ENCODE measurements at regions of chr2 and their contacts with region 1.

Region 1: GRCh38 chr2:38315707-38316333 is 61.3 kb downstream of the ATL2 start:
- DNase-seq: no peak
- H3K4me3 Mint-ChIP-seq: no peak overlapping the region
- H3K27ac Mint-ChIP-seq: no peak overlapping the region
- H3K4me1 Mint-ChIP-seq: peaks cover 2% of the 10 kb centered on the region
- H3K27me3 Mint-ChIP-seq: no peaks in the 10 kb centered on the region

Region 2: GRCh38 chr2:38377050-38377828 is 61.4 kb after region 1 on chr2 and contains the start of gene ATL2:
- CTCF ChIA-PET with region 1: interaction called, 18 read pairs
- DNase-seq: peak; percentile 97
- H3K4me3 Mint-ChIP-seq: peak within 1 kb of the TSS; percentile 91
- H3K27ac Mint-ChIP-seq: peak within 1 kb of the TSS; percentile 96
- H3K4me1 Mint-ChIP-seq: peaks cover 65% of the 10 kb centered on the region
- H3K27me3 Mint-ChIP-seq: no peaks in the 10 kb centered on the region

Region 3: GRCh38 chr2:38465789-38466127 is 149.9 kb after region 1 on chr2:
- CTCF ChIA-PET with region 1: interaction called, 24 read pairs
- DNase-seq: peak; percentile 29
- H3K4me3 Mint-ChIP-seq: no peak overlapping the region
- H3K27ac Mint-ChIP-seq: no peak overlapping the region
- H3K4me1 Mint-ChIP-seq: no peaks in the 10 kb centered on the region
- H3K27me3 Mint-ChIP-seq: peaks cover 15% of the 10 kb centered on the region

Region 4: DNA sequence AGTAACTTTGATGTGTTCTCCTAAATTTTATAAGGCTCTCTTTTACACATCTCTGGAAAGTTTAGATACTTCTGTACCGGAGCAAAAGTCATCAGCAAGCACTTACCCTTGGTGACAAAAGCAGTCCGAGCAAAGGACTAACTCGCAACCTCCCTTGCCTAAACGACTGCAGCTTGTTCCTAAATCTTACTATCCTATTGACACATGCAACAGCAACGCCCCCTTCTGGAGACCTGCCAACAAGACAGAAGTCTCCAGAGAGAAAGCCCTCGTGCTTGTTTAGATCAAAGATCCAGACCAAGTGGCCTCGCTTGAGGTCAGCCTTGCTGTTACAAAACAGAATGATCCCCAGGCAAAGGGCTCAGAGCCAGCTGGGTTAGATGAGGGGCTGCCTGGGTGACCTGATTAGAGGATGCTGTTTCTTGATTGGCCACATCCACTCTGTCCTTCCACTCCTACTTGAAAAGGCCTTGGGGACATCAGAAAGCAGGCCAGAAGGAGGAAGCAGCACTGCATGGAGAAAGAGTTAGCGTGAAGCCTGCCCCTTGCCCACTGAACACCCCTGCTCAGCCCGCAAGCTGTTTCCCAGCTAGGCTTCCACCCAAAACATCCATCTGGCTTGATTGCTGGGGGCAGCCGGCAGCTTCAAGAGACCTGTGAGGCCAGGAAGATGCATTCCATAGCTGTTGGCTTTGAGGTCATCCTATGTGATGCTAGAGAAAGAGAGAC is 192.7 kb after region 1 on chr2:
- CTCF ChIA-PET with region 1: interaction called, 131 read pairs
- DNase-seq: peak; percentile 87
- H3K4me3 Mint-ChIP-seq: no peak overlapping the region
- H3K27ac Mint-ChIP-seq: no peak overlapping the region
- H3K4me1 Mint-ChIP-seq: peaks cover 13% of the 10 kb centered on the region
- H3K27me3 Mint-ChIP-seq: peaks cover 50% of the 10 kb centered on the region